Posterior vena cava (tissue), 2 donors: ENCODE measurements at regions of chr15 and their contacts with region 1.

Region 1: GRCh38 chr15:24318981-24319380 is 356.6 kb upstream of the NPAP1 start:
- DNase-seq: no peak

Region 2: DNA sequence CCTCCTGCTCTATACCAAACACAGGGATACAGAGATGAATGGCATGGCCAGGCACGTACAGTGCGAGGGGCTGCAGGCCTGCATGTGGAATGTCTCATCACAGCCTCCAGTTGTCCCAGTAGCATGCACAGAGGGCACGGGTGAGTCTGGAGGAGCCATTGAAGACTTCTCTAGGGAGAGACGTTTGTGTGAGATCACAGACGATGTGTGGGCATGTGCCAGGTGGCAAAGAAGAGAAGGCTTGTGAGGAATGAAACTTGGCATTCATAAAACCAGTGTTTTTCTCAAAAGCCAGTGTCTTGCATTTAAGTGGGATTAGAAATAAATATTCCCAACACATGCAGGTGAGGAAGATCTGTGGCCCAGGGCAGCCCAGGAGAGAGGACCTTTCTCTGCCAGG is 1238.9 kb after region 1 on chr15:
- intact Hi-C with region 1: loop called in 1 of 2 experiments (anchors 5 kb)
- DNase-seq: no peak